ENCODE measurements at regions of chr13 and their contacts with region 1.

Region 1: GRCh38 chr13:46160471-46161066 is 21.4 kb downstream of the LCP1 start:
- DNase-seq: peak in 7 of 14 experiments; percentile 19 to 91 (median 51)
- ATAC-seq: peak; percentile 83
- H3K4me3 ChIP-seq: no peak overlapping the region
- H3K4me3 Mint-ChIP-seq: peak overlapping the region; percentile 83
- H3K27ac ChIP-seq: peak overlapping the region; percentile 62 to 69
- H3K27ac Mint-ChIP-seq: peak overlapping the region; percentile 91
- H3K4me1 ChIP-seq: peaks cover 32% of the 10 kb centered on the region
- H3K4me1 Mint-ChIP-seq: peaks cover 57% of the 10 kb centered on the region
- H3K27me3 ChIP-seq: no peaks in the 10 kb centered on the region
- H3K27me3 Mint-ChIP-seq: no peaks in the 10 kb centered on the region
- CTCF ChIP-seq: peak; percentile 89

Region 2: GRCh38 chr13:46149272-46150133 is 11.1 kb before region 1 on chr13:
- CTCF ChIA-PET with region 1: interaction called, 19 read pairs
- POLR2A ChIA-PET with region 1: interaction called, 3 read pairs
- intact Hi-C with region 1: no loop called
- DNase-seq: peak in 1 of 14 experiments; percentile 31
- ATAC-seq: no peak
- H3K4me3 ChIP-seq: no peak overlapping the region
- H3K4me3 Mint-ChIP-seq: no peak overlapping the region
- H3K27ac ChIP-seq: peak overlapping the region in 1 of 2 donors; percentile 32
- H3K27ac Mint-ChIP-seq: peak overlapping the region; percentile 79
- H3K4me1 ChIP-seq: peaks cover 2% of the 10 kb centered on the region
- H3K4me1 Mint-ChIP-seq: peaks cover 52% of the 10 kb centered on the region
- H3K27me3 ChIP-seq: no peaks in the 10 kb centered on the region
- H3K27me3 Mint-ChIP-seq: no peaks in the 10 kb centered on the region
- CTCF ChIP-seq: no peak

Region 3: DNA sequence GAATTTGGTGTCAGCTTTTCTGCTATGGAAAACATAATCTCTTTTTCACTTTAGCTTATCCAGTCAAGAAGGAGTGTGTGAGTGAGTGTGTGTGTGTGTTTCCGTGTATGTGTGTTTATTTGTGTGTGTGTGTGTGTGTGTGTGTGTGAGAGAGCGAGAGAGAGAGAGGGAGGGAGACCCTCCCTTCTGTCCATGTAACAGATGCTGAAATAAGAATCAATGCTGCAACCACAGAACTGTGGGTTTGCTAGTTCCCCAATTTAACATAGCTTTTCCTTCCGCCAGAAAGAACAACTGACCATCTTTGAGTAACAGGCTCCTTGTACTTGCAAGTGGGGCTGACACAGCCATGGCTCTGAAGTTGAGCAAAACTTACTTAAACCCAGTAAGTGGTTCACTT is 16.2 kb after region 1 on chr13:
- CTCF ChIA-PET with region 1: interaction called, 70 read pairs
- POLR2A ChIA-PET with region 1: interaction called, 217 read pairs
- intact Hi-C with region 1: loop called in 1 of 2 experiments (anchors 1 kb)
- DNase-seq: peak in 4 of 14 experiments; percentile 38 to 71 (median 60)
- ATAC-seq: no peak
- H3K4me3 ChIP-seq: peak overlapping the region; percentile 84
- H3K4me3 Mint-ChIP-seq: peak overlapping the region; percentile 72
- H3K27ac ChIP-seq: peak overlapping the region; percentile 58 to 75
- H3K27ac Mint-ChIP-seq: peak overlapping the region; percentile 98
- H3K4me1 ChIP-seq: peaks cover 46% of the 10 kb centered on the region
- H3K4me1 Mint-ChIP-seq: peaks cover 77% of the 10 kb centered on the region
- H3K27me3 ChIP-seq: no peaks in the 10 kb centered on the region
- H3K27me3 Mint-ChIP-seq: no peaks in the 10 kb centered on the region
- CTCF ChIP-seq: no peak

Region 4: DNA sequence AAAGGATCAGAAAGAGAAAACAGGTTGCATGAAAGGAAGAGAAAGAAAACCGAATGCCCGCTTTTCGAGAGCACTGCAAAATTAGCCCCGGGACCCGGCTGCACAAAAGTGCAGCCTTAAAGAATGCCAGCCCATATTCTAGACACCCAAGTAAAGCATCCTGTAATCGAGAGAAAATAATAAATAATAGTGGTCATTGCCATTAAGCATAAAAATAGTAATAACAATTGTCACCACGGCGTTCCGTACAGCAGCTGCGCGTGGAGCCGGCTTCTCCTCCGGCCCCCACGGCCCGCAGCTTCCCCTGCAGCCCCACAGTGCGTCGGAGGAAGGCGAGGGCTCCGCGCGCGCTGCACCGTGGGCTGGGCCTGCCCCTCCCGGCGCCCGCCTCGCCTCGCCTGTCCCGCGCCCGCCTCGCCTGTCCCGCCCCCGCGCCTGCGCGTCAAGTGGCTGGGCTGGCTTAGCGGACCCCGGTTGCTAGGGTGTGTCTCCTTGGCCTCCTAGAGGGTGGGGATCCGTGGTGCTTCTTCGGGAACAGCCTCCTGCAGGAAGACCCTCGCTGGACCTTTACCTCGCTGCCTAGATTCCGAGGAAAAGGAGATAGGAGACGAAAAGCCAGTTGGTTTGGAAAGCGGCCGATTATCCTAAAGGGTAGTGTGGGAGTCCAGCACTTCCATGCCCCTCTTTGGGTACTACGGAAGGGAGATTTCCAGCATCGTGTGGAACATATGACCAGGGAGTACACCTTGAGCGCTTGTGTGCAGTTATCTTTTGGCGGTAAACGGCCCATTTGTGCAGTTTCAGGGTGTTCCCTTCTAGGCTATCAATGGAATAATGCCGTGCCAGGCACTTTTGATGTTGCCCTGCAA is 51.1 kb after region 1 on chr13 and contains the start of gene LRRC63:
- CTCF ChIA-PET with region 1: interaction called, 6 read pairs
- POLR2A ChIA-PET with region 1: interaction called, 11 read pairs
- intact Hi-C with region 1: loop called (anchors 2 to 10 kb)
- DNase-seq: peak; percentile 63 to 92 (median 80)
- ATAC-seq: peak; percentile 91
- H3K4me3 ChIP-seq: peak within 1 kb of the TSS; percentile 61
- H3K4me3 Mint-ChIP-seq: peak within 1 kb of the TSS; percentile 90
- H3K27ac ChIP-seq: peak within 1 kb of the TSS; percentile 54 to 78
- H3K27ac Mint-ChIP-seq: peak within 1 kb of the TSS; percentile 88
- H3K4me1 ChIP-seq: peaks cover 6% of the 10 kb centered on the region
- H3K4me1 Mint-ChIP-seq: peaks cover 22% of the 10 kb centered on the region
- H3K27me3 ChIP-seq: no peaks in the 10 kb centered on the region
- H3K27me3 Mint-ChIP-seq: no peaks in the 10 kb centered on the region
- CTCF ChIP-seq: no peak
- total RNA-seq, gene LRRC63: 0.17 TPM in 1 of 2 experiments, not detected in the other

Region 5: DNA sequence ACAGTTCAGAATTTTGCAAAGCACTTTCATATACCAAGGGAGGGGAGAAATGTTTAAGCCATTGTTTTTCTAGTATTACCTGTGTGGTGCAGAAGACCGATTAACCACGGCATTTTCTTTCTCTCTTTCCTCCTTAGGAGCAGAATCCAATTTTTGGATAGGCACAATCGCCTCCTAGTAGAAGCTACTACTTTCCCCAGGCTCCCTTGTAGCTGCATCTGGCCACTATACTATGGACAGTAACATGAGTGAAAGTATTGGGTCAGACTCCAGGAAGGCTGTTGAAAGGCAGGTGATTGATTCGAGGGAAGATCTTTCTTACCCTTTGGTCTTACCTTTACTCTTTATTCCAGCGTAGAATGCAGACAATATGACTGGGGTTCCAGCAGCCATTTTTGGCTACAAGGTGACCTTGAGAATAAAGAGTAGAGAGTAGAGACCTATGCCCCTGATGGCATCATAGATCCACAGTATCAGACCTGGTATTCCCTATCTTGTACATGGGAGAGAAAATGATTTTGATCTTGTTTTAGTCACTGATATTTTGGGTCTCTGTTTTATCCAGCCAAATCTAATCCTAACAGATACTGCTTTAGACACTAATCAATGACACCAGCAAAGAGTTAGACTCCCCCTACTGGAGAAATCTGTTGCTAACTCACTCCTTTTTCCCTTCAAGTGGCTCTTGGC is 128.1 kb after region 1 on chr13:
- CTCF ChIA-PET with region 1: interaction called, 8 read pairs
- POLR2A ChIA-PET with region 1: interaction called, 3 read pairs
- intact Hi-C with region 1: loop called (anchors 1 to 5 kb)
- DNase-seq: peak in 4 of 14 experiments; percentile 23 to 79 (median 77)
- ATAC-seq: peak; percentile 96
- H3K4me3 ChIP-seq: no peak overlapping the region
- H3K4me3 Mint-ChIP-seq: no peak overlapping the region
- H3K27ac ChIP-seq: no peak overlapping the region
- H3K27ac Mint-ChIP-seq: peak overlapping the region; percentile 11
- H3K4me1 ChIP-seq: peaks cover 5% of the 10 kb centered on the region
- H3K4me1 Mint-ChIP-seq: peaks cover 22% of the 10 kb centered on the region
- H3K27me3 ChIP-seq: no peaks in the 10 kb centered on the region
- H3K27me3 Mint-ChIP-seq: no peaks in the 10 kb centered on the region
- CTCF ChIP-seq: peak; percentile 90

Measured in CD4-positive, alpha-beta T cell (primary cell).